ENCODE measurements at regions of chr2 and their contacts with region 1.

Region 1: GRCh38 chr2:217950401-217950871 is 52.4 kb downstream of the TNS1 start:
- DNase-seq: peak; percentile 73

Region 2: DNA sequence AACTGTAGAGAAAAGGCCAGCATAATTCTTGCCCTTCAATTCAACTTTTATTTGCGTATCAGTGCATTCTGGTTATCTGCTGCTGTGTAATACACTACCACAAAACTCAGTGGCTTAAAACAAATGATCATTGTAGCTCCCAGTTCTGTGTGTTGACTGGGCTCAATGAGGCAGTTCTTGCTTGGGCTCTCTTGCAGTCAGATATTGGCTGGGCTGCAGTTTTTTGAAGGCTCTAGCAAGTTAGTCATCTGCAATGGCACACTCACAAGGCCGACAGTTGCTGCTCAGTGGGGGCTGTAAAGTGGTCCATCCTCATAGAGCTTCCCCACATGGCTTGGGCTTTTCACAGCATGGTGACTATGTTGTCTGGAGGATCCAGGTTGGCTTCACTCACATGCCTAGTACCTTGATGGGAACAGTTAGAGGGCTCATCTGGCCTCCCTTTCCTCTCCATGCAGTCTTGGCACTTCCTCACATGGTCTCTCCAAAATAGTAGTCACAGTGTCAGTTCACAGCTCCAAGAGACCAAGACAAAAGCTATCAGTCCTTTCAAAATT is 980.0 kb before region 1 on chr2:
- intact Hi-C with region 1: no loop called
- DNase-seq: no peak

Region 3: DNA sequence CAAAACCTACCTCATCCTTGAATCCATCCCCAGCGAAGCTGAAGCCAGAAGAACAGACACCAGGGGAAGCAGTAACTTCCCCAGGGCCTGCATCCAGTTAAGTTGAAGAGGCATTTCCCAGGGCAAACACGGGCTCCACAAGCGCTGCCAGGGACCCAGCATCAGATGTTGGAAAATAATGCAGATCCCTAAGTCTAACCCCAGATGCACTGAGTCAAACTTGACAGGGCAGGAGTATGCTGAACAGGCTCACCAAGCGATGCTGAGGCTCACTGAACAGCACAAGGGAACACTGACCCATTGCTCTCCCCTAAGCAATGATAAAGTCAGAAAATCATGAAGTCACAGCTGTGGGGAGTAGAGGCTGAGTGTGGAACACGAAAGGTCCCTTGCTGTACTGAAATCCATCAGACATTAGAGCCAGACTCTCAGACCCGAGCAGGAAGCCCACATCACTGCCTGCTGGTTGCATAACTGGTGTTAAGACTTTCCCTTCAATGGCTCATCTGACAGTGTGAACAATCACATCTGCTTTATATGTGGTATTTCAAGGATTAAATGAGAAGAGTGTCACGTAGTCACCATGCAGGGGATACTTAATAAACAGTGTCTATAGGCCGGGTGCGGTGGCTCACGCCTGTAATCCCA is 16.1 kb after region 1 on chr2:
- intact Hi-C with region 1: loop called (anchors 1 kb)
- DNase-seq: peak; percentile 10

Measured in cardiac septum (tissue), 1 donor.